HepG2 (cell line): ENCODE measurements at regions of chr1 and their contacts with region 1.

Region 1: GRCh38 chr1:10378081-10378841 is 20.6 kb upstream of the PGD start:
- DNase-seq: no peak
- ATAC-seq: no peak
- H3K4me3 ChIP-seq: no peak overlapping the region
- H3K27ac ChIP-seq: no peak overlapping the region
- H3K4me1 ChIP-seq: peaks cover 11% of the 10 kb centered on the region; the same call in 1 of the 2 replicates
- H3K27me3 ChIP-seq: no peaks in the 10 kb centered on the region
- CTCF ChIP-seq: no peak
- EP300 ChIP-seq: no peak
- POLR2A ChIP-seq: no peak
- RAD21 ChIP-seq: no peak

Region 2: GRCh38 chr1:10152709-10153284 is 225.5 kb before region 1 on chr1:
- CTCF ChIA-PET with region 1: no interaction called
- POLR2A ChIA-PET with region 1: no interaction called
- in situ Hi-C with region 1: no loop called
- intact Hi-C with region 1: no loop called
- DNase-seq: no peak
- ATAC-seq: peak; percentile 79
- H3K4me3 ChIP-seq: no peak overlapping the region
- H3K27ac ChIP-seq: peak overlapping the region; percentile 38
- H3K4me1 ChIP-seq: peaks cover 7% of the 10 kb centered on the region
- H3K27me3 ChIP-seq: no peaks in the 10 kb centered on the region
- CTCF ChIP-seq: peak; percentile 74
- EP300 ChIP-seq: no peak
- POLR2A ChIP-seq: no peak
- RAD21 ChIP-seq: peak; percentile 30; the same call in 1 of the 2 replicates

Region 3: GRCh38 chr1:10494754-10495474 is 116.7 kb after region 1 on chr1:
- CTCF ChIA-PET with region 1: interaction called, 3 read pairs
- POLR2A ChIA-PET with region 1: no interaction called
- in situ Hi-C with region 1: no loop called
- intact Hi-C with region 1: loop called (anchors 1 kb)
- DNase-seq: peak; percentile 40
- ATAC-seq: peak; percentile 91
- H3K4me3 ChIP-seq: no peak overlapping the region
- H3K27ac ChIP-seq: no peak overlapping the region
- H3K4me1 ChIP-seq: peaks cover 19% of the 10 kb centered on the region
- H3K27me3 ChIP-seq: no peaks in the 10 kb centered on the region
- CTCF ChIP-seq: peak; percentile 87
- EP300 ChIP-seq: no peak
- POLR2A ChIP-seq: no peak
- RAD21 ChIP-seq: peak; percentile 73

Region 4: GRCh38 chr1:10555614-10556429 is 177.6 kb after region 1 on chr1:
- CTCF ChIA-PET with region 1: no interaction called
- POLR2A ChIA-PET with region 1: no interaction called
- in situ Hi-C with region 1: no loop called
- intact Hi-C with region 1: no loop called
- DNase-seq: peak; percentile 44
- ATAC-seq: peak; percentile 91
- H3K4me3 ChIP-seq: peak overlapping the region in 2 of 3 experiments; percentile 3 to 38; a peak in 3 of 6 replicates
- H3K27ac ChIP-seq: peak overlapping the region; percentile 46
- H3K4me1 ChIP-seq: peaks cover 29% of the 10 kb centered on the region
- H3K27me3 ChIP-seq: no peaks in the 10 kb centered on the region
- CTCF ChIP-seq: no peak
- EP300 ChIP-seq: no peak
- POLR2A ChIP-seq: peak in 1 of 2 experiments; percentile 15; a peak in 1 of 4 replicates
- RAD21 ChIP-seq: no peak